GM12878 (cell line): ENCODE measurements at regions of chr11 and their contacts with region 1.

Region 1: DNA sequence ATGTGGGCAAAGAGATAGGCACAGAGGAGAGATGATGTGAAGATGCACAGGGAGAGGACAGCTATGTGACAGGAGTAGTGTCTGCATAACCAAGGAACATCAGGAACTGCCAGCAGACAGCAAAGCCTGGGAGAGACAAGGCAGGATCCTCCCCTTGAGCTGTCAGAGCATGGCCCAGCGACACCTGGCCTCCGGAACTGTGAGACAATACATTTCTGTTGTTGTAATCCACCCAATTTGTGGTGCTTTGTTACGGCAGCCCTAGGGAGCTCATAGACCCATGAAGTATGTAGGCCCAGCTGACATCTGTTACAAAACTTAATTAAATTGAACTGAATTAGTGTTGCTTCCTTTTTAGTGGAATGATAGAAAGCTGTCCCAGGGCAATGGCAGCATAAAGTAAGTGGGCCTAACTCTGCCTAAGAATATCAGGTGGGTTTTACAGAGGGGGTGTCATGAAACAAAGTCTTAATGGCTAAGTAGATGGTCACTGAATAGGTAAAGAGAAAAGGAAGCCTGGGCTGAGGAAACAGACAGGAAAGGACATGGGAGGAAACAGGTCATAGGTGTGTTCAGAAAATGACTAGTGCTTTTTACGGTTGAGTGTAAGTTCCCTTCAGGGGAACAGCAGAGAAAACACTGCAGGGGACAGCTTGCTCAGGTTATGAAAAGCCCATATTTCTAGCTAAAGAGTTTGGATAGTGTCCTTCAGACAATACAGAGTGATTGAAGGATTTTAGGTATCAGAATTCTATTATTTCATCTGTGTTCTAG is 24.8 kb downstream of the RASSF10 start:
- DNase-seq: no peak
- ATAC-seq: peak; percentile 80
- H3K4me3 ChIP-seq: no peak overlapping the region
- H3K27ac ChIP-seq: no peak overlapping the region
- H3K4me1 ChIP-seq: no peaks in the 10 kb centered on the region
- H3K27me3 ChIP-seq: no peaks in the 10 kb centered on the region; a peak in 2 of 4 replicates
- CTCF ChIP-seq: no peak
- EP300 ChIP-seq: no peak
- POLR2A ChIP-seq: no peak
- RAD21 ChIP-seq: no peak

Region 2: DNA sequence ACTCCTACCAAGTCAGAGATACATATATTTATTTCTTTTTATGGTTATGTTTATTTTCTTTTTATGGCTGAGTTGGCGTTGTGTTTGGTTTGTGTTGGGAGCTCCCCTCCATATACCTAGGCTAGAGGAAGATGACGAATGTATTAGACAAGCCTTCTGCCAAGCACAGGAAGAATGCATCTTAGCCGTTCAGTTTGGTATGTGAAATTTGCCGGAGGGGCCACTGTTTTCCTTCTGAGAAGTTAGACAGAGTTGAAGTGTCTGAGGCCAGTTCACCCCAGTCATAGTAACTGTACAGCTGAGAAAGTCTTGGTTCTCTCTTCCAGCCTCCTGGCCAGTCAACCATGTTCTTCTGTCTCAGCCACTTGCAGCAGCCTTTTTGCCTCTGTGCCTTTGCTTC is 329.9 kb before region 1 on chr11:
- CTCF ChIA-PET with region 1: no interaction called
- POLR2A ChIA-PET with region 1: no interaction called
- RAD21 ChIA-PET with region 1: no interaction called
- SMC1A ChIA-PET with region 1: no interaction called
- in situ Hi-C with region 1: no loop called
- intact Hi-C with region 1: no loop called
- DNase-seq: no peak
- ATAC-seq: no peak
- H3K4me3 ChIP-seq: no peak overlapping the region
- H3K27ac ChIP-seq: no peak overlapping the region
- H3K4me1 ChIP-seq: no peaks in the 10 kb centered on the region
- H3K27me3 ChIP-seq: no peaks in the 10 kb centered on the region
- CTCF ChIP-seq: no peak
- EP300 ChIP-seq: no peak
- POLR2A ChIP-seq: no peak
- RAD21 ChIP-seq: no peak

Region 3: DNA sequence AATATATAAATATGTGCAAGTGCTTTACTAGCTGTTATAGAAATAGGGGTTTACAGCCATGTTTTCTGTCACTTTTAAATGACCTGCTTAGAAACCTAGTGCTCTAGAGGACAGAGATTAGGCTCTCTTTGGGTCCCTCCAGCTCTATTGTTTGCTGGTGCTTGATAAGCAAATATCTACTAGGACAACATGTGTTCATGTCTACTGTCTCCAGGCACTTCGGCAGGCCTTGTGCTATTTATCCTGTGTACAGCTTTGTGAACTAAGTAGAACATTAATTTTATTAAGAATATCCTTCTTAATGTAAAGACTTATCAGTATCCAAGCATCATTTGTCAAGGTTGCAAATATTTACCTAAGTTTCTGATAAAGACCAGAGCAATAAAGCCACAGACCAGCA is 36.8 kb before region 1 on chr11:
- CTCF ChIA-PET with region 1: no interaction called
- POLR2A ChIA-PET with region 1: no interaction called
- RAD21 ChIA-PET with region 1: no interaction called
- SMC1A ChIA-PET with region 1: no interaction called
- in situ Hi-C with region 1: no loop called
- intact Hi-C with region 1: loop called (anchors 1 kb)
- DNase-seq: no peak
- ATAC-seq: no peak
- H3K4me3 ChIP-seq: no peak overlapping the region
- H3K27ac ChIP-seq: no peak overlapping the region
- H3K4me1 ChIP-seq: no peaks in the 10 kb centered on the region
- H3K27me3 ChIP-seq: no peaks in the 10 kb centered on the region
- CTCF ChIP-seq: no peak
- EP300 ChIP-seq: no peak
- POLR2A ChIP-seq: no peak
- RAD21 ChIP-seq: no peak

Region 4: GRCh38 chr11:13009921-13010748 is 23.8 kb before region 1 on chr11:
- CTCF ChIA-PET with region 1: no interaction called
- POLR2A ChIA-PET with region 1: interaction called, 4 read pairs
- RAD21 ChIA-PET with region 1: interaction called, 5 read pairs
- SMC1A ChIA-PET with region 1: interaction called, 12 read pairs
- in situ Hi-C with region 1: no loop called
- intact Hi-C with region 1: no loop called
- DNase-seq: no peak
- ATAC-seq: no peak
- H3K4me3 ChIP-seq: no peak overlapping the region
- H3K27ac ChIP-seq: no peak overlapping the region
- H3K4me1 ChIP-seq: no peaks in the 10 kb centered on the region
- H3K27me3 ChIP-seq: peaks cover 0 to 4% of the 10 kb centered on the region in 2 experiments; a peak in 3 of 4 replicates
- CTCF ChIP-seq: no peak; a peak in 1 of 6 replicates
- EP300 ChIP-seq: no peak
- POLR2A ChIP-seq: no peak
- RAD21 ChIP-seq: no peak

Region 5: DNA sequence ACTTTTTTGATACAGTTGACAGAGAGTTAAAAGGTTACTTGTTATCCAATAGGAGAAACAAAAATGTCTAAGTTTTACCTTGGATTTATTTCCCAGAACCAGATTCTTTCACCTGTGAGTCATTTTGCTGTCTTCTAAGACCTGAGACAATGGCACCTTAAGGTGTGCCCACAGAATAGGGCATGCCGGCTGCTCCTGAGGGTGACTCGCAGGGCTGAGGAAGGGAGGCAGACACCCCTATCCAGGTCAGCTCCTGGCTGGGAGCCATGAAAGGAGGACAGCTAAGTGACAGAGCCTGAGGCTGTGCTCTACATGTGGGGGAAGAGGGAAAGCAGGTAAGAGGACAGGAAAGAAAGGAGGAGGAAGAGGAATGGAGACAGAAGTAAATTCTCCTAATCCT is 43.0 kb after region 1 on chr11:
- CTCF ChIA-PET with region 1: no interaction called
- POLR2A ChIA-PET with region 1: no interaction called
- RAD21 ChIA-PET with region 1: no interaction called
- SMC1A ChIA-PET with region 1: no interaction called
- in situ Hi-C with region 1: no loop called
- intact Hi-C with region 1: no loop called
- DNase-seq: no peak
- ATAC-seq: no peak
- H3K4me3 ChIP-seq: no peak overlapping the region
- H3K27ac ChIP-seq: no peak overlapping the region
- H3K4me1 ChIP-seq: no peaks in the 10 kb centered on the region
- H3K27me3 ChIP-seq: peaks cover 0 to 2% of the 10 kb centered on the region in 2 experiments
- CTCF ChIP-seq: no peak
- EP300 ChIP-seq: no peak
- POLR2A ChIP-seq: no peak
- RAD21 ChIP-seq: no peak